CD8-positive, alpha-beta T cell (primary cell): ENCODE measurements at regions of chr2 and their contacts with region 1.

Region 1: GRCh38 chr2:230643576-230644291 is 68.9 kb upstream of the CAB39 start:
- DNase-seq: peak in 4 of 9 experiments; percentile 48 to 76 (median 54)
- ATAC-seq: peak; percentile 98
- H3K4me3 ChIP-seq: peak overlapping the region in 1 of 2 experiments; percentile 28
- H3K4me3 Mint-ChIP-seq: peak overlapping the region; percentile 59
- H3K27ac ChIP-seq: peak overlapping the region; percentile 57 to 87
- H3K27ac Mint-ChIP-seq: peak overlapping the region; percentile 85
- H3K4me1 ChIP-seq: peaks cover 25% of the 10 kb centered on the region
- H3K4me1 Mint-ChIP-seq: peaks cover 24% of the 10 kb centered on the region
- H3K27me3 ChIP-seq: no peaks in the 10 kb centered on the region
- H3K27me3 Mint-ChIP-seq: no peaks in the 10 kb centered on the region
- CTCF ChIP-seq: no peak

Region 2: DNA sequence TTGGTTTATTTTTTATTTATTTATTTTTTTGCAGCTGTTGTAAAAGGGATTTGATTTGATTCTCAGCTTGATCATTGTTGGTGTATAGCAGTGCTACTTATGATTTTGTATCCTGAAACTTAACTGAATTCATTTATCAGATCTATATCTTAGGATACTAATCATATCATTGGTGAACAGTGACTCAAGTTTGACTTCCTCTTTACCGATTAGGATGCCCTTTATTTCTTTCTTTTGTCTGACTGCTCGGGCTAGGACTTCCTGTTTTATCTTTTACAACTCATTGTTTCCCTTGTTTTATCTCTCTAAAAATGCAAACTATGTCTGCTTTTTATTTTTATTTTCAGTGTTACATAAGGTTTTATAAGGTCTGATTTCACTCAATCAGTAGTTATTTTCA is 204.1 kb before region 1 on chr2:
- CTCF ChIA-PET with region 1: no interaction called
- POLR2A ChIA-PET with region 1: no interaction called
- intact Hi-C with region 1: no loop called
- DNase-seq: peak in 2 of 9 experiments; percentile 30 to 50
- ATAC-seq: no peak
- H3K4me3 ChIP-seq: no peak overlapping the region
- H3K4me3 Mint-ChIP-seq: peak overlapping the region; percentile 70
- H3K27ac ChIP-seq: peak overlapping the region; percentile 19 to 63
- H3K27ac Mint-ChIP-seq: peak overlapping the region; percentile 93
- H3K4me1 ChIP-seq: peaks cover 49% of the 10 kb centered on the region
- H3K4me1 Mint-ChIP-seq: peaks cover 61% of the 10 kb centered on the region
- H3K27me3 ChIP-seq: no peaks in the 10 kb centered on the region
- H3K27me3 Mint-ChIP-seq: no peaks in the 10 kb centered on the region
- CTCF ChIP-seq: no peak

Region 3: GRCh38 chr2:230658877-230659652 is 15.3 kb after region 1 on chr2:
- CTCF ChIA-PET with region 1: interaction called, 8 read pairs
- POLR2A ChIA-PET with region 1: interaction called, 10 read pairs
- intact Hi-C with region 1: loop called in 1 of 2 experiments (anchors 2 kb)
- DNase-seq: peak in 5 of 9 experiments; percentile 20 to 66 (median 47)
- ATAC-seq: peak; percentile 47
- H3K4me3 ChIP-seq: peak overlapping the region in 1 of 2 experiments; percentile 23
- H3K4me3 Mint-ChIP-seq: peak overlapping the region; percentile 56
- H3K27ac ChIP-seq: peak overlapping the region in 1 of 2 experiments; percentile 55
- H3K27ac Mint-ChIP-seq: peak overlapping the region; percentile 91
- H3K4me1 ChIP-seq: peaks cover 78% of the 10 kb centered on the region
- H3K4me1 Mint-ChIP-seq: peaks cover 84% of the 10 kb centered on the region
- H3K27me3 ChIP-seq: no peaks in the 10 kb centered on the region
- H3K27me3 Mint-ChIP-seq: no peaks in the 10 kb centered on the region
- CTCF ChIP-seq: no peak

Region 4: DNA sequence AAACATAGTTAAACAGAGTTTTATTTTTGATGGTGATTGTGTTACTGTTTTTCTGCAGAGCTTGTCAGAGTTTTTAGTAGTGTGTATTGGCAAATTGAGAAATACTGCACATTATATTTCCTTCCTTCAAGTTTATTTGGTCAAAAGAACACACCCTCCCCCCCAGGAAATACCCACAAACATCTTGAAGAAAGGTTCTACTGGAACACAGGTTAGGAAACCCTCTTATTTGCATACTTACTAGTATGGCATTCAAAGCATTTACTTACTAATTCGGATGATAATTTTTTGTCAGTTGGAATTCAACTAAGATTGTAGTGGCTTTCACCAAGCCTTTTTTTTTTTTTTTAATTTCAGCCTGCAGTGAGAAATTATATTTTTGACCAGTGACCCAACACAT is 78.0 kb after region 1 on chr2:
- CTCF ChIA-PET with region 1: no interaction called
- POLR2A ChIA-PET with region 1: interaction called, 4 read pairs
- intact Hi-C with region 1: loop called in 1 of 2 experiments (anchors 5 kb)
- DNase-seq: peak in 2 of 9 experiments; percentile 17 to 49
- ATAC-seq: no peak
- H3K4me3 ChIP-seq: no peak overlapping the region
- H3K4me3 Mint-ChIP-seq: peak overlapping the region; percentile 9
- H3K27ac ChIP-seq: no peak overlapping the region
- H3K27ac Mint-ChIP-seq: peak overlapping the region; percentile 86
- H3K4me1 ChIP-seq: peaks cover 80% of the 10 kb centered on the region
- H3K4me1 Mint-ChIP-seq: peaks cover 86% of the 10 kb centered on the region
- H3K27me3 ChIP-seq: no peaks in the 10 kb centered on the region
- H3K27me3 Mint-ChIP-seq: no peaks in the 10 kb centered on the region
- CTCF ChIP-seq: no peak

Region 5: GRCh38 chr2:231198291-231199173 is 554.8 kb after region 1 on chr2 and contains the start of gene ARMC9:
- CTCF ChIA-PET with region 1: no interaction called
- POLR2A ChIA-PET with region 1: no interaction called
- intact Hi-C with region 1: no loop called
- DNase-seq: peak; percentile 30 to 84 (median 70)
- ATAC-seq: peak; percentile 94
- H3K4me3 ChIP-seq: peak within 1 kb of the TSS; percentile 98
- H3K4me3 Mint-ChIP-seq: peak within 1 kb of the TSS; percentile 92
- H3K27ac ChIP-seq: peak within 1 kb of the TSS; percentile 50 to 56
- H3K27ac Mint-ChIP-seq: peak within 1 kb of the TSS; percentile 60
- H3K4me1 ChIP-seq: peaks cover 9% of the 10 kb centered on the region
- H3K4me1 Mint-ChIP-seq: peaks cover 14% of the 10 kb centered on the region
- H3K27me3 ChIP-seq: no peaks in the 10 kb centered on the region
- H3K27me3 Mint-ChIP-seq: peaks cover 3% of the 10 kb centered on the region
- CTCF ChIP-seq: no peak
- total RNA-seq, gene ARMC9: 1.2 to 1.4 TPM